SK-N-SH (cell line): ENCODE measurements at regions of chr17 and their contacts with region 1.

Region 1: GRCh38 chr17:77429919-77430752 is 289.4 kb downstream of the SEC14L1 start:
- DNase-seq: peak; percentile 93
- H3K4me3 ChIP-seq: peak overlapping the region in 1 of 2 experiments; percentile 42; a peak in 1 of 4 replicates
- H3K27ac ChIP-seq: peak overlapping the region; percentile 78 to 97
- H3K4me1 ChIP-seq: peaks cover 82 to 87% of the 10 kb centered on the region in 2 experiments
- H3K27me3 ChIP-seq: no peaks in the 10 kb centered on the region
- CTCF ChIP-seq: peak; percentile 99
- EP300 ChIP-seq: peak; percentile 80 to 98
- RAD21 ChIP-seq: peak; percentile 98

Region 2: DNA sequence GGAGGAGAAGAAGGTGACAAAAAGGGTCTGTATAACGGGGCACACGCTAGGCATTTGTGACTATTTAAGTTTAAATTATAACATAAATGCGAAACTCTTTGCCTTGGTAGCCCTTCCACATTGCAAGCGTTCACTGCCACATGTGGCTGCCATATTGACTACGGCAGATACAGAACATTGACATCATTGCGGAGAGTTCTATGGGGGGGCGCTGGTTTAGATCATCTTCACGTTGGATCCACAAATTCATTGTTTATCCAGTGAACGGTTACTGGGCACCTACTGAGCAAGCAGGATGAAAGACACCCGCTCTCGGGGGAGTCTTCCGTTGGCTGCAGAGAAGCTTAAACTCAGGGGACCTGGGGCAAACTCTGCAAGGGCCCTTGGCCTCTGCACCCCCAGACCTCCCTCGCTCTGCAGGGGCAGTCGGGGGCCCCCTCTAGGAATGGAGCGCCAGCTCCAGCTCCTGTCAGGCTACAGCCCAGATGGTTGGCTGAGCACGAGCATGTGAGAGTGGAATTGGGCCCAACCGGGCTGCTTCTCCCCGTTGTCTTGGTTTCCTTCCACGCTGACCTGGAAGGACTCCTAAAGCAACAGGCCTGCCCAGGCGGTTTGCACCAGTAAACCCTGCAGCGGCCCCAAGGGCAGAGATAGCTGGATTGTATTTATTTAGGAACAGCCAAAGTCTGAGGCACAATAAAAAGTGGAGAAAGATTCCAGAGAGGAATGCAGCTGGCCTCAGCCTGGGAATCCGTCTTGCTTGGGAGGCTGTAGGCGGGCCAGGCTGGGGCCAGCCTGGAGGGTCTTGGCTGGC is 117.1 kb before region 1 on chr17:
- CTCF ChIA-PET with region 1: interaction called, 19 read pairs
- POLR2A ChIA-PET with region 1: interaction called, 3 read pairs
- DNase-seq: peak; percentile 29
- H3K4me3 ChIP-seq: no peak overlapping the region
- H3K27ac ChIP-seq: peak overlapping the region in 1 of 2 experiments; percentile 3; a peak in 1 of 4 replicates
- H3K4me1 ChIP-seq: peaks cover 42 to 67% of the 10 kb centered on the region in 2 experiments
- H3K27me3 ChIP-seq: no peaks in the 10 kb centered on the region
- CTCF ChIP-seq: no peak
- EP300 ChIP-seq: no peak
- RAD21 ChIP-seq: no peak

Region 3: GRCh38 chr17:77365584-77366186 is 64.5 kb before region 1 on chr17:
- CTCF ChIA-PET with region 1: interaction called, 133 read pairs
- POLR2A ChIA-PET with region 1: no interaction called
- DNase-seq: peak; percentile 48
- H3K4me3 ChIP-seq: no peak overlapping the region; a peak in 1 of 4 replicates
- H3K27ac ChIP-seq: peak overlapping the region; percentile 80 to 97
- H3K4me1 ChIP-seq: peaks cover 47 to 67% of the 10 kb centered on the region in 2 experiments
- H3K27me3 ChIP-seq: no peaks in the 10 kb centered on the region
- CTCF ChIP-seq: no peak
- EP300 ChIP-seq: 0 out of 4 replicates have a peak, but pooled peaks of 1 of the 2 experiments have one; percentile 4
- RAD21 ChIP-seq: no peak

Region 4: DNA sequence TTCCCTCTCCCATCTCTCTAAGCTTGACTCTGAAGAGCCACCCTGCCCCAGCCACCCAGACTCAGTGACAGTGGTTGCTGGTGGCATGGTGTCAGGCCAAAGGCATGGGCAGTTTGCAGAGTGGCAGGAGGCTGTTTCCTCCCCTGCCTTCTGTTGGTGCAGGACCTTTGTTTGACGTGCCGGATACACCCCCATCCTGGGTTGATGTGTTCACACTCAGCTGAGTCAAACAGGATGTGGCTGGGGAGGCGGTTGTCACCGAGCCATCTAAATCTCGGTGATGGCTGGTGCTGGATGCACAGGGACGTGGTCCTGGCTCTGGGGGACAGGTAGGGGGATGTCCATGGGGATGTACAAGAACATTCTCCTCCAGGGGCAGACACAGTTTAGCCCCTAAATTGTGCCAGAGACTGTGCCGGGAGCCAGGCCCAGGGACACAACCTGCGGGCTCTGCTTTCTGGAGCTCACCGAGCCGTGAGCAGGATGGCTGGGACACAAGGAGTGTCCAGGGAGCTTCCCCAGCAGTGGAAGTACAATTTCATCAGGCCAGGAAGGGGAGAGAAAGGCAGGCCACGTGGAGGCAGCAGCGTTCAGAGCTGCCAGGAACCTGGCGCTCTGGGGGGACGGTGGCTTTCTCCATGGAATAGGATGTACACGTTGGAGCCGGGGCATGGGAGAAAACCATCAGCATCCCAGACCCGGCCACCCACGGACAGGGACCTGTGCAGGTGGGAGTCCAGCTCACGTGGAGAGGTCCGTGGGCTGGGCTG is 25.1 kb before region 1 on chr17:
- CTCF ChIA-PET with region 1: interaction called, 364 read pairs
- POLR2A ChIA-PET with region 1: interaction called, 4 read pairs
- DNase-seq: no peak
- H3K4me3 ChIP-seq: no peak overlapping the region
- H3K27ac ChIP-seq: peak overlapping the region in 1 of 2 experiments; percentile 55; a peak in 2 of 4 replicates
- H3K4me1 ChIP-seq: peaks cover 27 to 40% of the 10 kb centered on the region in 2 experiments; a peak in 3 of 4 replicates
- H3K27me3 ChIP-seq: no peaks in the 10 kb centered on the region
- CTCF ChIP-seq: no peak
- EP300 ChIP-seq: no peak; a peak in 1 of 4 replicates
- RAD21 ChIP-seq: no peak

Region 5: GRCh38 chr17:77462101-77462500 is 32.0 kb after region 1 on chr17:
- CTCF ChIA-PET with region 1: interaction called, 19 read pairs
- POLR2A ChIA-PET with region 1: no interaction called
- DNase-seq: no peak
- H3K4me3 ChIP-seq: no peak overlapping the region
- H3K27ac ChIP-seq: no peak overlapping the region
- H3K4me1 ChIP-seq: peaks cover 16 to 29% of the 10 kb centered on the region in 2 experiments; a peak in 3 of 4 replicates
- H3K27me3 ChIP-seq: no peaks in the 10 kb centered on the region
- CTCF ChIP-seq: no peak
- EP300 ChIP-seq: no peak
- RAD21 ChIP-seq: no peak

Region 6: DNA sequence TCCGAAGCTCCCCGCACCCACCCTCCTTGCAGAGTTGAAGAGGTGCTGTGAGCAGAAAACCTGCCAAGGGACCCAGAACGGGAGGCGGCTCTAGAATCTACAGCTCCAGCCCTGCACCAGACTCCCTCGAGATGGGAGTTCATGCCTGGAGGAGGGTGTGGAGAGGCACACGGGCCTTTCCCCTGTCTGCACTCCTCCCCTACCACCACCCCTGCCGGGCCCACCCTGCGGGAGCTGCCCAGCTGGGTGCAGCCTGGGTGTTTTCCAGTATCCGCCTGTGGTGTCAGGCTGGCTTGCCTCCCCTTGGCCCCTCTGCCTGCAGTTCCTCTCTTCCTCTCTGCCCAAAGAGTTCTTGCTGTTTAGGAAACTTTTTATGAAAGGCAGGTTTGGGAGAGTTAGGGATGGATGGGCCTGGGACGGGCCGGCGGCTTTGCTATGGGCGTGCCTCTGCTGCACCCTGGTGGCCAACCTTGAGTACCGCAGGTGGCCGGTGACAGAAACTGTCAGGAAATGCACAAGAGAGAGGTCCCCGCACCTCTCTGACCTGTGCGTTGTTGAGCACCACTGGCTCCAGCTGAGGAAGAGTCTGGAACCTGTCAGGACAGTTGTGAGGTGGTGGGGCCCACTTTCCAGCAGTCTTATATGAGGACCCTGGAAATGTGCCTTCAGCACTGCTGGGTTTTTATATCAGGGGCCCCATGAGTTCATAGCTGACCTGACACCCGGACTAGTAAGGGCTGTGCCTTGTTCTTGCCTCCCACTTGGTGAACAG is 64.7 kb after region 1 on chr17:
- CTCF ChIA-PET with region 1: interaction called, 566 read pairs
- POLR2A ChIA-PET with region 1: interaction called, 4 read pairs
- DNase-seq: peak; percentile 96
- H3K4me3 ChIP-seq: no peak overlapping the region; a peak in 1 of 4 replicates
- H3K27ac ChIP-seq: peak overlapping the region; percentile 18 to 29; a peak in 2 of 4 replicates
- H3K4me1 ChIP-seq: peaks cover 4% of the 10 kb centered on the region in 2 experiments; a peak in 2 of 4 replicates
- H3K27me3 ChIP-seq: no peaks in the 10 kb centered on the region
- CTCF ChIP-seq: peak; percentile 100
- EP300 ChIP-seq: no peak
- RAD21 ChIP-seq: peak; percentile 100